ENCODE measurements at regions of chr12 and their contacts with region 1.

Region 1: GRCh38 chr12:108157870-108158459 is 28.9 kb downstream of the WSCD2 start:
- DNase-seq: no peak
- ATAC-seq: no peak
- H3K4me3 ChIP-seq: no peak overlapping the region
- H3K4me3 Mint-ChIP-seq: no peak overlapping the region
- H3K27ac ChIP-seq: no peak overlapping the region
- H3K27ac Mint-ChIP-seq: no peak overlapping the region
- H3K4me1 ChIP-seq: no peaks in the 10 kb centered on the region
- H3K4me1 Mint-ChIP-seq: no peaks in the 10 kb centered on the region
- H3K27me3 ChIP-seq: no peaks in the 10 kb centered on the region
- H3K27me3 Mint-ChIP-seq: peaks cover 21% of the 10 kb centered on the region
- CTCF ChIP-seq: no peak

Region 2: GRCh38 chr12:108218921-108219320 is 61.0 kb after region 1 on chr12:
- CTCF ChIA-PET with region 1: no interaction called
- POLR2A ChIA-PET with region 1: no interaction called
- intact Hi-C with region 1: no loop called
- DNase-seq: no peak
- ATAC-seq: no peak
- H3K4me3 ChIP-seq: no peak overlapping the region
- H3K4me3 Mint-ChIP-seq: no peak overlapping the region
- H3K27ac ChIP-seq: no peak overlapping the region
- H3K27ac Mint-ChIP-seq: no peak overlapping the region
- H3K4me1 ChIP-seq: no peaks in the 10 kb centered on the region
- H3K4me1 Mint-ChIP-seq: no peaks in the 10 kb centered on the region
- H3K27me3 ChIP-seq: no peaks in the 10 kb centered on the region
- H3K27me3 Mint-ChIP-seq: peaks cover 10% of the 10 kb centered on the region
- CTCF ChIP-seq: no peak

Region 3: DNA sequence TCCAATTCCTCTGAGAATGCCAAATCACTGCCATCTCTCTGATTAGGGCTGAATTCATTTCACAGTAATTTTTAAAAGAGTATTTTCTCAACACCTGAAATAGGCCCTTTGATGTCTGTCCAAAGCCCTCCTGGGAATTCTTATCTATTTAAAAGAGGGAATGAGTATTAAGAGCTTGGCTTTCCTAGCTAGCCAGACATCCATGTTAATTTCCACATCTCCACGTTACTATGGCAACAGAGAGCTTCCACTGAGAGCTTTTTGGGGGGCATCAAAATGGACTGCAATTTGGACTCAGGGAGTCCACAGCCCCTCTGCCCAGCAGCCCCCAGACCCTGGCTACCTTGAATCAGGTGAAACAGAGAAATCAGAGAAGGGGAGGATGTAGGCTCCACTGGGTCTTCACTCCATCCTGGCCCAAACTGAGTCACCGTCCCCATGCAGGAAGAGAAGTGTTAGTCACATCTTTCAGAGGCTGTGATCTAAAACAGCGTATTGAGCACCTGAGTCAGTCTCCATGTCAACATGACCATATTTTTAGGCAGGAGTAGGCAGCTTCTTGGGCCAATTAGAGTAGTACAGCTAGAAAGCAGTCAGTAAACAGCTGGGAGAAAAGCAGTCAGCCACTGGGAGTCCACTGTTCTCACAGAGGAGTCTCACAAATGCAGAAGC is 350.1 kb after region 1 on chr12:
- CTCF ChIA-PET with region 1: no interaction called
- POLR2A ChIA-PET with region 1: no interaction called
- intact Hi-C with region 1: no loop called
- DNase-seq: no peak
- ATAC-seq: peak; percentile 21
- H3K4me3 ChIP-seq: no peak overlapping the region
- H3K4me3 Mint-ChIP-seq: no peak overlapping the region
- H3K27ac ChIP-seq: no peak overlapping the region
- H3K27ac Mint-ChIP-seq: peak overlapping the region; percentile 38
- H3K4me1 ChIP-seq: peaks cover 7 to 13% of the 10 kb centered on the region in 2 donors
- H3K4me1 Mint-ChIP-seq: peaks cover 19% of the 10 kb centered on the region
- H3K27me3 ChIP-seq: peaks cover 0 to 5% (median 0%) of the 10 kb centered on the region in 4 experiments
- H3K27me3 Mint-ChIP-seq: peaks cover 12% of the 10 kb centered on the region
- CTCF ChIP-seq: no peak

Region 4: DNA sequence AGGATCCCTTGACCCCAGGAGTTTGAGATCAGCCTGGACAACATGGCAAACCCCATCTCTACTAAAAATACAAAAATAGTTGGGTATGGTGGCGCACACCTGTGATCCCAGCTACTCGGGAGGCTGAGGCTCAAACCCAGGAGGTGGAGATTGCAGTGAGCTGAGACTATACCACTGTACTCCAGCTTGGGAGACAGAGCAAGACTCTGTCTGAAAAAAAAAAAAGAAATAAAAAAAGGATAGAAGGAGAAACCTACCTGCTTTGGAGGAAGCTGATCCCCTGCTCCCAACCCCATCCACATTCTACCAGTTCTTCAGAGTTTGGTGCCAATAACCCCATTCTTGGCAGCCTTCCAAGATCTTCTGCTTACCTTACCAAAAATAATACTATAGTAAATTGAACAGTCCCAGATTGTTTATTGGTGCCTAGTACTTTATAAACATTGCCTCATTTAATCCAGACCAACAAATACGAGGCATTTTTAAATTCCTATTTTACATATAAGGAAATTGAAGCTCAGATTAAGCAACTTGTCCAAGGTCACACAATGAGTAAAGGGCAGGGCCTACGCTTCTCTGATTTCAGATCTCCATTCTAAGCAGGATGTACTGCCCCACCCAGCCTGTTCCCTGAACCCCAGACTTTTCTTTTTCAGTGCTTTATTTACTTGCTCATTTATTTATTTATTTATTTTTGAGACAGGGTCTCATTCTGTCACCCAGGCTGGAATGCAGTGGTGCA is 1522.5 kb after region 1 on chr12:
- CTCF ChIA-PET with region 1: no interaction called
- POLR2A ChIA-PET with region 1: interaction called, 20 read pairs
- intact Hi-C with region 1: no loop called
- DNase-seq: no peak
- ATAC-seq: no peak
- H3K4me3 ChIP-seq: no peak overlapping the region
- H3K4me3 Mint-ChIP-seq: no peak overlapping the region
- H3K27ac ChIP-seq: no peak overlapping the region
- H3K27ac Mint-ChIP-seq: no peak overlapping the region
- H3K4me1 ChIP-seq: no peaks in the 10 kb centered on the region
- H3K4me1 Mint-ChIP-seq: no peaks in the 10 kb centered on the region
- H3K27me3 ChIP-seq: peaks cover 0 to 11% (median 0%) of the 10 kb centered on the region in 4 experiments
- H3K27me3 Mint-ChIP-seq: peaks cover 22% of the 10 kb centered on the region
- CTCF ChIP-seq: no peak